ENCODE measurements at regions of chr1 and their contacts with region 1.

Region 1: DNA sequence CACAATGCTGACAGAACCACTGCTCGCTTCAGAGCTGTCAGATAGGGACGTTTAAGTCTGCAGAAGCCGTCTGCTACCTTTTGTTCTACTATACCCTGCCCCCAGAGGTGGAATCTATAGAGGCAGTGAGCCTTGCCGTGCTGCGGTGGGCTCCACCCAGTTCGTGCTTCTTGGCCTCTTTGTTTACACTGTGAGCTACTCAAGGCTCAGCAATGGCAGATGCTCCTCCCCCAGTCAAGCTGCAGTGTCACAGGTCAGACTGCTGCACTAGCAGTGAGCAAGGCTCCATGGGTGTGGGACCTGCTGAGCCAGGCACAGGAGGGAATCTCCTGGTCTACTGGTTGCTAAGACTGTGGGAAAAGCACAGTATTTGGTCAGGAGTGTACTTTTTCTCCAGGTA is 47.1 kb downstream of the LEPR start:
- DNase-seq: peak; percentile 56 to 60
- H3K4me3 ChIP-seq: no peak overlapping the region
- H3K27ac ChIP-seq: no peak overlapping the region
- H3K4me1 ChIP-seq: 0 out of 7 replicates have a peak, but pooled peaks cover 0 to 1% (median 0%) of the 10 kb centered on the region in 4 experiments
- H3K27me3 ChIP-seq: no peaks in the 10 kb centered on the region
- CTCF ChIP-seq: peak in 2 of 3 experiments; percentile 34 to 44; a peak in 3 of 4 replicates
- EP300 ChIP-seq: no peak
- POLR2A ChIP-seq: no peak
- RAD21 ChIP-seq: peak; percentile 21 to 22; a peak in 2 of 4 replicates

Region 2: GRCh38 chr1:65431111-65431705 is 36.3 kb before region 1 on chr1:
- CTCF ChIA-PET with region 1: interaction called, 18 read pairs
- POLR2A ChIA-PET with region 1: no interaction called
- DNase-seq: no peak
- H3K4me3 ChIP-seq: no peak overlapping the region
- H3K27ac ChIP-seq: no peak overlapping the region
- H3K4me1 ChIP-seq: peaks cover 2 to 14% (median 9%) of the 10 kb centered on the region in 4 experiments; a peak in 5 of 7 replicates
- H3K27me3 ChIP-seq: no peaks in the 10 kb centered on the region
- CTCF ChIP-seq: peak in 2 of 3 experiments; percentile 40 to 58; a peak in 2 of 4 replicates
- EP300 ChIP-seq: no peak
- POLR2A ChIP-seq: no peak
- RAD21 ChIP-seq: peak; percentile 70 to 74